Breast epithelium (tissue), 4 donors: ENCODE measurements at regions of chr22 and their contacts with region 1.

Region 1: GRCh38 chr22:24883432-24883831 is 63.1 kb downstream of the LHFPL7 start:
- DNase-seq: no peak
- H3K4me3 ChIP-seq: no peak overlapping the region
- H3K27ac ChIP-seq: no peak overlapping the region
- H3K4me1 ChIP-seq: no peaks in the 10 kb centered on the region
- H3K27me3 ChIP-seq: no peaks in the 10 kb centered on the region
- CTCF ChIP-seq: no peak
- POLR2A ChIP-seq: no peak

Region 2: DNA sequence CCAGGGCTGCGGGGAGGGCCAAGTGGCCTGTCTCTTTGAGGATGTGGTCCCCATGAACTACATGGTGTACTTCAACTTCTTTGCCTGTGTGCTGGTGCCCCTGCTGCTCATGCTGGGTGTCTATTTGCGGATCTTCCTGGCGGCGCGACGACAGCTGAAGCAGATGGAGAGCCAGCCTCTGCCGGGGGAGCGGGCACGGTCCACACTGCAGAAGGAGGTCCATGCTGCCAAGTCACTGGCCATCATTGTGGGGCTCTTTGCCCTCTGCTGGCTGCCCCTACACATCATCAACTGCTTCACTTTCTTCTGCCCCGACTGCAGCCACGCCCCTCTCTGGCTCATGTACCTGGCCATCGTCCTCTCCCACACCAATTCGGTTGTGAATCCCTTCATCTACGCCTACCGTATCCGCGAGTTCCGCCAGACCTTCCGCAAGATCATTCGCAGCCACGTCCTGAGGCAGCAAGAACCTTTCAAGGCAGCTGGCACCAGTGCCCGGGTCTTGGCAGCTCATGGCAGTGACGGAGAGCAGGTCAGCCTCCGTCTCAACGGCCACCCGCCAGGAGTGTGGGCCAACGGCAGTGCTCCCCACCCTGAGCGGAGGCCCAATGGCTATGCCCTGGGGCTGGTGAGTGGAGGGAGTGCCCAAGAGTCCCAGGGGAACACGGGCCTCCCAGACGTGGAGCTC is 442.6 kb before region 1 on chr22:
- intact Hi-C with region 1: loop called (anchors 5 kb)
- DNase-seq: no peak
- H3K4me3 ChIP-seq: no peak overlapping the region
- H3K27ac ChIP-seq: peak overlapping the region in 1 of 2 donors; percentile 25
- H3K4me1 ChIP-seq: no peaks in the 10 kb centered on the region
- H3K27me3 ChIP-seq: no peaks in the 10 kb centered on the region
- CTCF ChIP-seq: no peak
- POLR2A ChIP-seq: no peak

Region 3: GRCh38 chr22:25791556-25791955 is 908.1 kb after region 1 on chr22:
- intact Hi-C with region 1: no loop called
- DNase-seq: no peak
- H3K4me3 ChIP-seq: no peak overlapping the region
- H3K27ac ChIP-seq: no peak overlapping the region
- H3K4me1 ChIP-seq: no peaks in the 10 kb centered on the region
- H3K27me3 ChIP-seq: peaks cover 0 to 6% of the 10 kb centered on the region in 2 donors
- CTCF ChIP-seq: no peak
- POLR2A ChIP-seq: no peak